ENCODE measurements at regions of chr3 and their contacts with region 1.

Region 1: DNA sequence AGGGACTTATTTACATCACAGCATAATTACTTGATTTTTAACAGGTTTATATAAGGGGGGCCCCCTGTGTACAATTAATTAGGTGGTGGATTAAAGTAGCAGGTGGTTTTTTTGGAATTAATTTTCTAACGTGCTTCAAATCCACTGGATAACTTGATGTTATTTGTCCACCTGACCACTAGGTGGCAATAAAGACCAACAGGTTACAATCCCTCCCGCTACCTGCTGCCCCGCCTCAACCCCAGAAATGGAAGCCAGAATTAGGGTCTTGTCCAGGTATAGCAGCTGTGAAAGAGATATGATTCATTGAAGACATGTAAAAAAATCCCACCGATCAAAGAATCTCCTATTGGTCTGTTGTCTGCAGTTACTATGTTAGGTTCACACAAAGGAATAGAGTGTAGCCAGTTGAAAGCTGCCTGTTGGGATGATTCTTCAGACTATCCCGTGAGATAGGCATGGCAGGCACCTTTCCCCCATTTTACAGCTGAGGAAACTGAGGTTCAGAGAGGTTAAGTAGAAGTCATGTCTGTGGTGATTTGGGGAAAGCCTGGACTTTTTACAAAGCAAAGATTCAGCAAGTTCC is 44.0 kb downstream of the MFSD1 start:
- DNase-seq: peak in 3 of 5 donors; percentile 24 to 54 (median 44)
- H3K4me3 ChIP-seq: no peak overlapping the region
- H3K4me3 Mint-ChIP-seq: no peak overlapping the region
- H3K27ac ChIP-seq: no peak overlapping the region
- H3K27ac Mint-ChIP-seq: no peak overlapping the region
- H3K4me1 ChIP-seq: no peaks in the 10 kb centered on the region
- H3K4me1 Mint-ChIP-seq: peaks cover 1 to 5% (median 5%) of the 10 kb centered on the region in 3 donors
- H3K27me3 ChIP-seq: no peaks in the 10 kb centered on the region
- H3K27me3 Mint-ChIP-seq: peaks cover 0 to 2% of the 10 kb centered on the region in 2 donors

Region 2: DNA sequence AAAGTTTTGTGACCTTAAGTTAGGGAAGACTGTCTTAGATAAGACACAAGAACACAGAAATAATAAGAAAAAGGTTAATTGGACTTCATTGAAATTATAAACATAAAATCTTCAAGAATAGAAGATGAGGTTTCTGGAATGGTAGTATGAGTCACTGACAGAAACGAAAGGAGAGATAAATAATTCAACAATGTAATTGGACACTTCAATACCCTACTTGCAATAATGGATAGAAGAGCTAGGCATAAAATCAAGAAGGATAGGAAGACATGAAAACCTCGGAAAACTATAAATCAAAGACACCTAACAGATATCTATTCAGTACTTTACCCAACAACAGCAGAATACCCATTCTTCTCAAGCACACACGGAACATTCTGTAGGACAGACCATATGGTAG is 59.9 kb before region 1 on chr3:
- CTCF ChIA-PET with region 1: no interaction called
- POLR2A ChIA-PET with region 1: no interaction called
- DNase-seq: no peak
- H3K4me3 ChIP-seq: no peak overlapping the region
- H3K4me3 Mint-ChIP-seq: no peak overlapping the region
- H3K27ac ChIP-seq: no peak overlapping the region
- H3K27ac Mint-ChIP-seq: no peak overlapping the region
- H3K4me1 ChIP-seq: no peaks in the 10 kb centered on the region
- H3K4me1 Mint-ChIP-seq: no peaks in the 10 kb centered on the region
- H3K27me3 ChIP-seq: no peaks in the 10 kb centered on the region
- H3K27me3 Mint-ChIP-seq: no peaks in the 10 kb centered on the region

Region 3: GRCh38 chr3:158801696-158802408 is 44.0 kb before region 1 on chr3 and contains the start of gene MFSD1:
- CTCF ChIA-PET with region 1: no interaction called
- POLR2A ChIA-PET with region 1: no interaction called
- DNase-seq: peak; percentile 85 to 93 (median 87)
- H3K4me3 ChIP-seq: peak within 1 kb of the TSS; percentile 95
- H3K4me3 Mint-ChIP-seq: peak within 1 kb of the TSS; percentile 80 to 95 (median 90)
- H3K27ac ChIP-seq: peak within 1 kb of the TSS; percentile 71
- H3K27ac Mint-ChIP-seq: peak within 1 kb of the TSS; percentile 71 to 97 (median 92)
- H3K4me1 ChIP-seq: peaks cover 33% of the 10 kb centered on the region
- H3K4me1 Mint-ChIP-seq: peaks cover 26 to 54% (median 46%) of the 10 kb centered on the region in 3 donors
- H3K27me3 ChIP-seq: no peaks in the 10 kb centered on the region
- H3K27me3 Mint-ChIP-seq: no peaks in the 10 kb centered on the region
- total RNA-seq, gene MFSD1: 25.3 to 26.4 TPM

Region 4: DNA sequence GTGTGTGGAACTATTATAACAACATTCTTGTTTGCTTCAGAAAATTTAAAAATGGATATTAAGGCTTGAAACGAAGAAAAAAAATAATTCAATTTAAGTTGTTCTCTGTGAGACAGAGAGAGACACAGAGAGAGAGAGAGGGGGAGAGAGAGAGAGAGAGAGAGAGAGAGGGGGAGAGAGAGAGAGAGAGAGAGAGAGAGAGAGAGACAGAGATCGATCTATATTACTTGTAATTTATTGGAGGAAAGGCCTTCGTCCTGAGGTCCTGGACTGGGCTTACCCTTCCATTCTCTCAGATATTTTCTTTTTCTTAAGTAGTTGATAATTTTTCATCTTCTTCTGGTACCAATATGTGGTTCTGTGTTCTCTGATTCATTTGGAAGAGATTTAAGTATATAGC is 18.1 kb before region 1 on chr3:
- CTCF ChIA-PET with region 1: no interaction called
- POLR2A ChIA-PET with region 1: no interaction called
- DNase-seq: no peak
- H3K4me3 ChIP-seq: no peak overlapping the region
- H3K4me3 Mint-ChIP-seq: no peak overlapping the region
- H3K27ac ChIP-seq: no peak overlapping the region
- H3K27ac Mint-ChIP-seq: peak overlapping the region in 1 of 8 donors; percentile 74
- H3K4me1 ChIP-seq: no peaks in the 10 kb centered on the region
- H3K4me1 Mint-ChIP-seq: no peaks in the 10 kb centered on the region
- H3K27me3 ChIP-seq: no peaks in the 10 kb centered on the region
- H3K27me3 Mint-ChIP-seq: no peaks in the 10 kb centered on the region

Region 5: DNA sequence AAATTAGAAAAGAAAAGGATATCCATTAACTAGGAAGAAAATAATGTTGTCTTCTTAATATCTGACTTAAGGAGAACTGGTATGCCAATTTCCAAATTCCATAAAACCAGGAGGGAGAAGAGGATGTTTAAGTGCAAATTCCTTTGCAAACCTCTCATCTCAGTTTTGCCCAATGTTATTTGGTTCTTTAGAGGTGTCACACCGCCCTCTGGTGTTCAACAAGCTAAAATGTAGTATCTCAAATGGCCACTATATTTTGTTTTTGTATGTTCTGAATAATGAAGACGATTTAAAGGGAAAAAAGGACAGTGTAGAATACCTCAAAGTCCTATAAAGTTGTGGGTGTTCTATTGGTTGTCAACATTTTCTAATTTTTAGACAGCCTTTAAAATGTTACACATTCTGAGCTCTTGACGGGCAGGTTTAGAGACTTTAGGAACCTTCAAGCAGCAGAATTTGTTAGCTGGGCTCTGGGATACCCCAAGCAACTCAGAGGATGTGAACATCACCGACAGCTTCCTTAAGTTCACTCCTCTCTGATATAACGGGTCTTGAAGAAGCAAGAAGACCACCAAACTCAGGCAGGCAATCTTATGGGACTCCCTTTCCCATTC is 414.3 kb after region 1 on chr3:
- CTCF ChIA-PET with region 1: interaction called, 16 read pairs
- POLR2A ChIA-PET with region 1: no interaction called
- DNase-seq: peak in 2 of 5 donors; percentile 2 to 17
- H3K4me3 ChIP-seq: no peak overlapping the region
- H3K4me3 Mint-ChIP-seq: no peak overlapping the region
- H3K27ac ChIP-seq: no peak overlapping the region
- H3K27ac Mint-ChIP-seq: no peak overlapping the region
- H3K4me1 ChIP-seq: no peaks in the 10 kb centered on the region
- H3K4me1 Mint-ChIP-seq: no peaks in the 10 kb centered on the region
- H3K27me3 ChIP-seq: no peaks in the 10 kb centered on the region
- H3K27me3 Mint-ChIP-seq: peaks cover 4 to 7% of the 10 kb centered on the region in 2 donors